ENCODE measurements at regions of chr1 and their contacts with region 1.

Region 1: DNA sequence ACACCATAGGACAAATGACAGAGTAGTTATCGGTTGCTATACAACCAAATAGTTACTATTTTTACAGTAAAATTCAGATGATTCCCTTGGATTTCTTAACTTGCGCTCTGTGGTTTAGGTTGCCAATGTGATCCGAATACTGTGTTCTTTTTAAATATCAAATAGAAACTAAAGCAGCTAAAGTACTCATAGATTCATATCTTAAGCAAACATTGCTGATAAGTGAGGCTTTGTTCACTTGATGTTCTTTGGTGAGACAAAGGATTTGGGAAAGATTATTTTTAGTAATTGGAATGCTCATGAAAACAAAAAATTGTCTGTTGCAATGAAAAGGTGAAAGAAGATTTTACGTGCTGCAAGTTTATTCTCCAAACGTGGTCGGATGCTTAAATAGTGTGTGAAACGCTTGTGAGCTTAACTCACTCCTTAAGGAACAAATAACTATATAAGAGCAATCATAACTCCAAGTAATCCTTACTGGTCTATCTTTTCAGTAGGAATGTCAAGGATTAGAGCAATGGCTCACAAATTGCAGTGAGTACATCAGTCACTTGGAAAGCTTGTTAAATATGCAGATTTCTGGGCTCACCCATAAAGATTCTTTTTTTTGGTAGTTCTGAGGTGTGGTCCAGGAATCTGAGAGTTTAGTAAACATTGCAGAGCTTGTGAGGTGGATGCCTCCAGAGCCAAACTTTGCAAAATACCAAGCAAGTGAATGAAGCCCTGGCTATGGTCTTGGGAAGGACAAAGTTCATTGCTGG is 31.8 kb upstream of the PDC start:
- DNase-seq: peak; percentile 33
- H3K4me3 Mint-ChIP-seq: peak overlapping the region; percentile 59
- H3K27ac Mint-ChIP-seq: peak overlapping the region; percentile 98
- H3K4me1 Mint-ChIP-seq: peaks cover 66% of the 10 kb centered on the region
- H3K27me3 Mint-ChIP-seq: no peaks in the 10 kb centered on the region
- CTCF ChIP-seq: no peak

Region 2: DNA sequence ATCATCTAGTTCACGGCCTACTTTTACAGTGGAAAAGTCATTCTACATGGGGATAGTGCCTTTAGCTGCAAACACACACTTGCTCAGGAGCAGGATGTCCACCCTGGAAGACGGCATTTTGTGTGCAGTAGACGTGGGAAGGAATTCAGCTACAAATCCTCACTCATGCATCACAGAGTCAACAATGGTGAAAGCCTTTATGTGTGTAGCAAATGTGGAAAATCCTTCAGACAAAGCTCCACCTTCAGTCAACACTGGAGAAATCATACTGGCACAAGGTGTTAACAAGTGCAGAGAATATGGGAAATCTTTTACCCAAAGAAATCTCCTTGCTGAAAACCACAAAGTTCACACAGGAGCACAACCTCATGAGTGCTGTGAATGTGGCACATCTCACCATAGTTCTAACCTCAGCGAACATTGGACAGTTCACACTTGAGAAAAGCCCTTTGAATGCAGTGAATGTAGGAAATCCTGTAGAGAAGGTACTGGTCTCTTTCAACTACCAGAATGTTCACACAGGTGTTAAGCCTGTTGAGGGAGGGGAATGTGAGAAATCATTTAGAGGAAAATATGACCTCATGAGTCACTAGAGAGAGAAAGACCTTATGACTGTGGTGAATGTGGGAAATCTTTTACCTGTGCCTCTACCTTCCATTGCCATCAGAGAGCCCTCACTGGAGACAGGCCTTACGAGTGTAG is 85.8 kb after region 1 on chr1:
- CTCF ChIA-PET with region 1: interaction called, 4 read pairs
- intact Hi-C with region 1: loop called (anchors 1 kb)
- DNase-seq: peak; percentile 51
- H3K4me3 Mint-ChIP-seq: no peak overlapping the region
- H3K27ac Mint-ChIP-seq: peak overlapping the region; percentile 95
- H3K4me1 Mint-ChIP-seq: peaks cover 57% of the 10 kb centered on the region
- H3K27me3 Mint-ChIP-seq: no peaks in the 10 kb centered on the region
- CTCF ChIP-seq: no peak

Region 3: GRCh38 chr1:186618401-186619170 is 125.9 kb after region 1 on chr1:
- CTCF ChIA-PET with region 1: no interaction called
- intact Hi-C with region 1: no loop called
- DNase-seq: peak; percentile 76
- H3K4me3 Mint-ChIP-seq: peak overlapping the region; percentile 9
- H3K27ac Mint-ChIP-seq: peak overlapping the region; percentile 39
- H3K4me1 Mint-ChIP-seq: peaks cover 15% of the 10 kb centered on the region
- H3K27me3 Mint-ChIP-seq: no peaks in the 10 kb centered on the region
- CTCF ChIP-seq: no peak

Measured in Calu3 (cell line).